ENCODE measurements at regions of chr2 and their contacts with region 1.

Region 1: DNA sequence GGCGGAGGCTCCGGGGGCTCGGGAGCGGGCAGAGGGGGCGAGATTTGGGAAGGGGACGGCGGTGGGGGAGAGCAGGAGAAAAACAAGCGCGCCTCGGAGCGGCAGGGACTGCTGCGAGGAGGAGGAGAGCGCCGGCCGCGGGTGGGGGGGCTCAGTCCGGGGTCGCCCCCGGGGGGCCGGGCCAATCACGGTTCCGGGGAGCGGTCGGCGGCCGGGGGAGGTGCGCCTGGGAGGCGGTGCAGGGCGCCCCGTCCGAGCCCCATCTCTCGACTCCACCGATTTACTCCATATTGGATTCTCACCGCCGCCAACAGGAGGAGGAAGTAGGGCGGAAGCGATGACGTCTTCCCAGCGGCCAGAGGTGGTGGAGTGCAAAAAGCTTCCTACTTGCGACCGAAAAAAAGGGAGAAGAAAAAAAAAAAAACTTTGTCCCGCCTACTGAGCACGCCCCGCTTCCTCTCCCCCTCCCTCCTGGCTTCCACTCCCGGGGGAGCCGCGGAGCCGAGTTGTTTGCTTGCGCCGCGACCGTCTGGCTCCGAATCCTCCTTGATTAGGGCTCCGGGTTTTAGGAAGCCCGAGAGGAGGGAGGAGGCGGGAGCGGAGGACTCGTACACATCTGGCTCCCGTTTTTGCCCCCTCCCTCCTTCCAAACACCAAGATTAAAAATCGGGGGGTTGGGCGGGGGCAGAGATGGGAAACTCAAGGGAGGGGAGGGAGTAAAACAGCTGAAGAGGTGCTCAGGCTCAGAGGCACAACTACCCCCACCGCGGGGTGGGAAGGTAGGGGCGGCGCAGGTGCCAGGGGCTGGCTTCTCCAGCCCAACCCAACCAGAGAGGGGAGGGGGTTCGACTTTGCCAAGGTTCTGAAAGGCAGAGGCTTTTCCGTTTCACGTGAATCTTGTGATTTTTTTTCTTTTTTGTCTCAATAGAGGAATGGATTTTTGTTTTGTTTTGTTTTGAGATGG is at the start of gene SPRED2:
- DNase-seq: no peak
- ATAC-seq: peak; percentile 38
- H3K4me3 ChIP-seq: peak within 1 kb of the TSS; percentile 80
- H3K27ac ChIP-seq: peak within 1 kb of the TSS; percentile 43
- H3K4me1 ChIP-seq: peaks cover 6% of the 10 kb centered on the region
- H3K27me3 ChIP-seq: no peaks in the 10 kb centered on the region
- CTCF ChIP-seq: no peak
- EP300 ChIP-seq: no peak
- POLR2A ChIP-seq: no peak; the same call in 1 of the 2 replicates
- RAD21 ChIP-seq: 0 out of 2 replicates have a peak, but pooled peaks have one; percentile 18
- polyA plus RNA-seq, gene SPRED2: 3.0 to 3.2 TPM

Region 2: GRCh38 chr2:64819774-64820696 is 612.5 kb before region 1 on chr2:
- CTCF ChIA-PET with region 1: no interaction called
- POLR2A ChIA-PET with region 1: no interaction called
- RAD21 ChIA-PET with region 1: no interaction called
- SMC1A ChIA-PET with region 1: no interaction called
- in situ Hi-C with region 1: no loop called
- intact Hi-C with region 1: no loop called
- DNase-seq: peak; percentile 78
- ATAC-seq: peak; percentile 97
- H3K4me3 ChIP-seq: peak overlapping the region; percentile 18; the same call in 1 of the 2 replicates
- H3K27ac ChIP-seq: peak overlapping the region; percentile 75
- H3K4me1 ChIP-seq: peaks cover 25% of the 10 kb centered on the region
- H3K27me3 ChIP-seq: no peaks in the 10 kb centered on the region
- CTCF ChIP-seq: no peak
- EP300 ChIP-seq: no peak
- POLR2A ChIP-seq: 0 out of 2 replicates have a peak, but pooled peaks have one; percentile 21
- RAD21 ChIP-seq: peak; percentile 10; the same call in 1 of the 2 replicates

Region 3: DNA sequence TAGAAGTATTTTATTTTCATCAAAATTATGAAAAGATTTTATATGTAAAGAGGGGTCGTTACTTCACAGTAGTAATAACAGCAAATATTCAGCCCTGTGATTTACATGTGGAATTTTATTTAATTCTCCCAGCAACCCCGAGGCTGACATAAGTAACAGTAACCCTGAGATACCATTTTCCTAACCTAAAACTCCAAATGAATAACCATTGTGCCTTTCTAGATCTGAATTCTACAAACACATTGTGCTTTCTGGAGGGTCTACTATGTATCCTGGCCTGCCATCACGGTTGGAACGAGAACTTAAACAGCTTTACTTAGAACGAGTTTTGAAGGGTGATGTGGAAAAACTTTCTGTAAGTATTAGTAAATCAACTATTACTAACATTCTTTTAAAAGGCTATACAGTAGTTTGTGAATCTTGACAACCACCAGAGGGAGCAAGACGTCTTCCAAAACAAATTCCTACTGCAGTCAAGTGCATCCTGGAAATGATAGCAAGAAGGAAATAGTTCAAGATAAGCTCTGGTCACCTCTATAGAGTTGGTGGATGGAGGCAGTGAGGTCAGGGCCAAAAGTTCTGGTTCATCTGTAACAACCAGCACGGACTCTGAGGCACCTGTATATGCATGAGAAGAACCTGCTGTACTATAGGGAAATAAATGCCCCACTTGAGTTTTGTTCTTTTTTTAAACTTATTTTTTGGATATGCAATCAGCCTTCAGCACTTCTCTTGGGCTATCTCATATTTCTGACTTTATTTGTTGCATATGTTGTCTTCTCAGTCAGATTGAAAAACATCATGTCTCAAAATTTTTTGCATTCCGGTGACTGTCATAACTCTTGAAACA is 167.5 kb before region 1 on chr2:
- CTCF ChIA-PET with region 1: interaction called, 26 read pairs
- POLR2A ChIA-PET with region 1: no interaction called
- RAD21 ChIA-PET with region 1: interaction called, 9 read pairs
- SMC1A ChIA-PET with region 1: interaction called, 11 read pairs
- in situ Hi-C with region 1: no loop called
- intact Hi-C with region 1: loop called (anchors 5 kb)
- DNase-seq: peak; percentile 20
- ATAC-seq: peak; percentile 80
- H3K4me3 ChIP-seq: no peak overlapping the region
- H3K27ac ChIP-seq: no peak overlapping the region
- H3K4me1 ChIP-seq: no peaks in the 10 kb centered on the region
- H3K27me3 ChIP-seq: no peaks in the 10 kb centered on the region
- CTCF ChIP-seq: peak; percentile 45 to 63 (median 56); a peak in 5 of 6 replicates
- EP300 ChIP-seq: no peak
- POLR2A ChIP-seq: no peak
- RAD21 ChIP-seq: peak; percentile 81

Region 4: GRCh38 chr2:65320042-65320725 is 112.3 kb before region 1 on chr2:
- CTCF ChIA-PET with region 1: interaction called, 5 read pairs
- POLR2A ChIA-PET with region 1: interaction called, 4 read pairs
- RAD21 ChIA-PET with region 1: interaction called, 5 read pairs
- SMC1A ChIA-PET with region 1: interaction called, 11 read pairs
- in situ Hi-C with region 1: no loop called
- intact Hi-C with region 1: loop called (anchors 5 kb)
- DNase-seq: peak; percentile 30
- ATAC-seq: peak; percentile 84
- H3K4me3 ChIP-seq: no peak overlapping the region
- H3K27ac ChIP-seq: peak overlapping the region; percentile 22
- H3K4me1 ChIP-seq: peaks cover 36% of the 10 kb centered on the region
- H3K27me3 ChIP-seq: no peaks in the 10 kb centered on the region
- CTCF ChIP-seq: peak; percentile 22 to 47 (median 42); a peak in 5 of 6 replicates
- EP300 ChIP-seq: peak in 1 of 2 experiments; percentile 57; a peak in 1 of 4 replicates
- POLR2A ChIP-seq: no peak
- RAD21 ChIP-seq: peak; percentile 48

Region 5: DNA sequence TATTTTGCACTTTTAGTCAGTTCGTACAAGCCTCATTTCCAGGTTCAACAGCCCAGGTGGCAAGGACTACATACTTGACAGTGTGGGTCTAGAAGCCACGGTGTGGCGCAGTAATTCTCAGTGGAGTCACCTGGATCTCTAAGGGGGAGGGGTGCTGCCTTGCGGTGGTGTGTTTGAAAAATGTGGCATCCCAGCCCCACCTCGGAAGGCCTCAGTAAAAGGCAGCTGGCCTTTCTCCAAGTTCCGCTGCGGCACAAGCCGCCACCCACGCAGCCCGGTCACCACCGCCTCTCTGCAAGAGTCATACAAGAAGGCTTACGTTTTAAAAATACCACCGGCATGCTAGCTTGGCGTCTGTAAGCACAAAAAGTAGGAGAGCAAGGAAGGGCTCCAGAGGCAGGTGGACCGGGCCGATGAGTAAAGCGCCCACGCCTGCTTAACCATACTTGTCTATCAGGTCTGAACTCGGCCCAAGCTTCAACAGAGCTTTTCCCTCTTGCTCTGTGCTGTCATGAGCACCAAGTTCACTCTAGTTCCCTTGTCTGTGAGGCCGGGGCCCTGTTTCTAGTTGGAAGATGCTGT is 49.6 kb before region 1 on chr2:
- CTCF ChIA-PET with region 1: interaction called, 5 read pairs
- POLR2A ChIA-PET with region 1: interaction called, 4 read pairs
- RAD21 ChIA-PET with region 1: interaction called, 17 read pairs
- SMC1A ChIA-PET with region 1: interaction called, 18 read pairs
- in situ Hi-C with region 1: no loop called
- intact Hi-C with region 1: loop called (anchors 1 kb)
- DNase-seq: no peak
- ATAC-seq: no peak
- H3K4me3 ChIP-seq: no peak overlapping the region
- H3K27ac ChIP-seq: peak overlapping the region; percentile 65
- H3K4me1 ChIP-seq: peaks cover 42% of the 10 kb centered on the region
- H3K27me3 ChIP-seq: no peaks in the 10 kb centered on the region
- CTCF ChIP-seq: peak in 1 of 3 experiments; percentile 37; a peak in 2 of 6 replicates
- EP300 ChIP-seq: no peak
- POLR2A ChIP-seq: no peak
- RAD21 ChIP-seq: peak; percentile 63

Region 6: DNA sequence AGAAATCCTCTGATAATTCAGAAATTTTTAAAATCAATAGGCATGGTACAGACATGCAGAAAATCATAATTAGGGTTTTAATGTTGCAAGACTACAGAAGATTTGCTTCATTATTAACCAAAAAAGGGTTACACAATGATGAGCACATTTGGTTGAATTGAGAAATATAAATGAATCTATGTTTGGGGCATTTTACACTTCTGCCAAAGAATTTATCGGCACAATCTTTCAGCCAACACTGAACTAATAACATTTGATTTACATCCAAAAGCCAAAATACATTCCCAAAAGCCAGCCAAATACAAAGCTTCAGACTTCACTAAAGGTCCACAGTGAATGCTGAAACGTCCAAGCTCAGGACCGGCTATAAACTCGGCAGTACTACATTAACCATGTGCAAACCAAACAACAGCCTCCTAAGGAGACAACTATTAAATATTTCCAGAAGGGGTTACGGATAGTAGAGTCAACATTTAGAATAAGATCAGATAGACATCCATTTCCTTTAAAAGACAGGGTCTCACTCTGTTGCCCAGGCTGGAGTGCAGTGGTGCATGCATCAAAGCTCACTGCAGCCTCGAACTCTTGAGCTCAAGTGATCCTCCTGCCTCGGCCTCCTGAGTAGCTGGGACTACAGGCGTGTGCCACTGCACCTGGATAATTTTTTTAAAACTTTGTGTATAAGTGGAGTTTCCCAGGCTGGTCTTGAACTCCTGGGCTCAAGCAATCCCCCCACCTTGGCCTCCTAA is 29.6 kb before region 1 on chr2:
- CTCF ChIA-PET with region 1: interaction called, 4 read pairs
- POLR2A ChIA-PET with region 1: interaction called, 6 read pairs
- RAD21 ChIA-PET with region 1: interaction called, 10 read pairs
- SMC1A ChIA-PET with region 1: interaction called, 21 read pairs
- in situ Hi-C with region 1: no loop called
- intact Hi-C with region 1: no loop called
- DNase-seq: no peak
- ATAC-seq: no peak
- H3K4me3 ChIP-seq: no peak overlapping the region
- H3K27ac ChIP-seq: no peak overlapping the region
- H3K4me1 ChIP-seq: peaks cover 22% of the 10 kb centered on the region
- H3K27me3 ChIP-seq: no peaks in the 10 kb centered on the region
- CTCF ChIP-seq: no peak
- EP300 ChIP-seq: no peak
- POLR2A ChIP-seq: no peak
- RAD21 ChIP-seq: no peak

Region 7: DNA sequence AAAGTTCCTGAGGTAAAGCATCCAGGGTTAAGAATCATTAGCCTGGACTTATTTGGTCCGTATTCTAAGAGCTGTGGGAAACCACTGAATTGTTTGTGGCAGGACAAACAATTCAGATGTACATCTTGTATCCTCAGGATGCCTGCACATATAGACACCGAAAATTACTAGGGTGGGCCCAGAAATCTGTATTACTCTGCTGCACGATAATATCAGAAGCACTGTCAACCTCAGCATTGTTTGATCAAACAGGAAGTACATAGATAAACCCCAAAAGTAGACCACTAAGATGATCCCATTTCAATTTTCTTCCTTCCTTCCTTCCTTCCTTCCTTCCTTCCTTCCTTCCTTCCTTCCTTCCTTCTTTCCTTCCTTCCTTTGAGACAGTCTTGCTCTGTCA is 34.0 kb after region 1 on chr2:
- CTCF ChIA-PET with region 1: no interaction called
- POLR2A ChIA-PET with region 1: no interaction called
- RAD21 ChIA-PET with region 1: no interaction called
- SMC1A ChIA-PET with region 1: no interaction called
- in situ Hi-C with region 1: no loop called
- intact Hi-C with region 1: no loop called
- DNase-seq: no peak
- ATAC-seq: no peak
- H3K4me3 ChIP-seq: no peak overlapping the region
- H3K27ac ChIP-seq: no peak overlapping the region
- H3K4me1 ChIP-seq: no peaks in the 10 kb centered on the region
- H3K27me3 ChIP-seq: peaks cover 0 to 2% of the 10 kb centered on the region in 2 experiments; a peak in 1 of 4 replicates
- CTCF ChIP-seq: no peak
- EP300 ChIP-seq: no peak
- POLR2A ChIP-seq: no peak
- RAD21 ChIP-seq: no peak

Region 8: GRCh38 chr2:65554765-65555591 is 122.5 kb after region 1 on chr2:
- CTCF ChIA-PET with region 1: interaction called, 5 read pairs
- POLR2A ChIA-PET with region 1: no interaction called
- RAD21 ChIA-PET with region 1: interaction called, 6 read pairs
- SMC1A ChIA-PET with region 1: no interaction called
- in situ Hi-C with region 1: no loop called
- intact Hi-C with region 1: loop called (anchors 1 kb)
- DNase-seq: peak; percentile 42
- ATAC-seq: peak; percentile 83
- H3K4me3 ChIP-seq: no peak overlapping the region
- H3K27ac ChIP-seq: no peak overlapping the region
- H3K4me1 ChIP-seq: peaks cover 14% of the 10 kb centered on the region
- H3K27me3 ChIP-seq: no peaks in the 10 kb centered on the region; a peak in 1 of 4 replicates
- CTCF ChIP-seq: no peak
- EP300 ChIP-seq: no peak
- POLR2A ChIP-seq: no peak
- RAD21 ChIP-seq: no peak